ENCODE measurements at regions of chr3 and their contacts with region 1.

Region 1: DNA sequence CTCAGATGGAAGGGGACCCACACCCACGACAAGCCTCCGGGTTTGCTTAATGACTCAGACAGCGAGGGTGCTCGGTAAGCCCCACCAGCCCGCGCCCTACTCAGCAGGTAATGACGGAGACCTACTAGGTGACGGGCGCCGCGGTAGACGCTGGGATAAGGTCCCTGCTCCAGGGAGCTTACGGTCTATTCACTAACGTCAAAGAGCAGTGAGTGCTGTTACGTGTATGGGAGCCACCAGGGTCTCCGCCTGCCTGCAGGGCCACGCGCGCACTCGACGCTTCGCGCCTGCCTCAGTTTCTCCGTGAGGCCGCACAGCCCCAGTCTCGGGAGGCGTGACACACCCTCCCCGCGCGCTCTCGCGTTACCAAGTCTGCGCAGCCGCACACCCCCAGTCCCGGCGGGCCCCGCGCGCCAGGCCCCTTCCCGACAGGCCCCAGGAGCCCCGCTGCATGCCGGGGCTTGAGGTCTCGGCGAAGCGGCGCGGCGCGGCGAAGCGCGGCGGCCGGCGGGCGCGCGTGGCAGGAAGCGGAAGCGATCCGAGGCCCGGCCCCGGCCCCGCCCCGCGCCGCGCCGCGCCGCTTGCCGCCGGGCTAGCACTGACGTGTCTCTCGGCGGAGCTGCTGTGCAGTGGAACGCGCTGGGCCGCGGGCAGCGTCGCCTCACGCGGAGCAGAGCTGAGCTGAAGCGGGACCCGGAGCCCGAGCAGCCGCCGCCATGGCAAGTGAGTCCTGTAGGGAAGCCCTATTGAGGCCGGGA is at the start of gene SEC61A1:
- DNase-seq: peak; percentile 97
- H3K4me3 Mint-ChIP-seq: peak within 1 kb of the TSS; percentile 98
- H3K27ac Mint-ChIP-seq: peak within 1 kb of the TSS; percentile 90
- H3K4me1 Mint-ChIP-seq: peaks cover 36% of the 10 kb centered on the region
- H3K27me3 Mint-ChIP-seq: no peaks in the 10 kb centered on the region
- total RNA-seq, gene SEC61A1: 147 to 149 TPM

Region 2: DNA sequence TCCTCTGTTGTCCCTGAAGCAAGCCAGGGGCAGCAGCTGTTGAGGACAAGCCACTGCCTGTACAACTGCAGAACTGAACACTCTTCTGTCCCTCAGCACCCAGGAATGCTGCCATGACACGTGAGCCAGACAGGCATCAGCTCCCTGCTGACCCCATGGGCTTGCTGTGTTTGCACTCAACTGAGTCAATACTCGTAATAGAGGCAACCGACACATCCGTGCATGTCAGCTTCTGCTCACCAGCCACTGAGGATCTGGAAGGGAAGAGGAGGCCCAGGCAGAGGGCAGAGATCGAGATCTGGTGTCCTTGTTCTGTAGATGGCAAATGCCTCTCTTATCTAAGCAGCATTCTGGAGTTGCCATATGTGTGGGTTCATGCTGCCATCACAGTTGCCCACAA is 54.1 kb before region 1 on chr3:
- CTCF ChIA-PET with region 1: no interaction called
- POLR2A ChIA-PET with region 1: no interaction called
- intact Hi-C with region 1: no loop called
- DNase-seq: no peak
- H3K4me3 Mint-ChIP-seq: no peak overlapping the region
- H3K27ac Mint-ChIP-seq: no peak overlapping the region
- H3K4me1 Mint-ChIP-seq: no peaks in the 10 kb centered on the region
- H3K27me3 Mint-ChIP-seq: no peaks in the 10 kb centered on the region

Region 3: DNA sequence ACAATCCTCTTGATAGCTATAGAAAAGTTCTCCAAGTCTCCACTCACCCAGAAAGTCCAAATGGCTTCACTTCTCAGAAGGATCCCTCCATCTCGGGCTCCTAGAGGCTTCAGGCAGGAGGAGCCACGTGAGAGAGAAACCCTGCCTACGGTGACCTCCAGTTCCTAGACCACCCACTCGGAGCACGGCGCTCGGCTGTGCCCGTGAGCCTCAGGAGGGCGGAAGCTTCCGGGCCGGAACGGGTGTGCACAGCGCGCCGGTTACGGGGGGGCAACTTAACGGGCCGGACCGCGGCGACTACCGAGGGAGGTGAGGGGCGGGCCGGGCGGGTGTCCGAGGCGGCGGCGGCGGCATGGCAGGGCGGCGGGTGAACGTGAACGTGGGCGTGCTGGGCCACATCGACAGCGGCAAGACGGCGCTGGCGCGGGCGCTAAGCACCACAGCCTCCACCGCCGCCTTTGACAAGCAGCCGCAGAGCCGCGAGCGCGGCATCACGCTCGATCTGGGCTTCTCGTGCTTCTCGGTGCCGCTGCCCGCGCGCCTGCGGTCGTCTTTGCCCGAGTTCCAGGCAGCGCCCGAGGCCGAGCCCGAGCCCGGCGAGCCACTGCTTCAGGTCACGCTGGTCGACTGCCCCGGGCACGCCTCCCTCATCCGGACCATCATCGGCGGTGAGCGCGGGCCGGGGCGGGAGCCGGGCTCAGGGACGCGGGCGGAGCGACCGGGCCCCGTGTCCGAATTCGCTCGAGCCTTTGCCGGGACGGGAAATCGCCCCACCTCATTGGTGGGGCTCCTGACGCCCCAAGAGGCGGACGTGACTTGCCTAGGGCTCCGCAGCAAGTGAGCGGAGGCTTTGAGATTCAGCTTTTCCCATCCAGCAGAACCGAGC is 101.4 kb after region 1 on chr3 and contains the start of gene EEFSEC:
- CTCF ChIA-PET with region 1: no interaction called
- POLR2A ChIA-PET with region 1: interaction called, 5 read pairs
- intact Hi-C with region 1: loop called (anchors 2 kb)
- DNase-seq: peak; percentile 91
- H3K4me3 Mint-ChIP-seq: peak within 1 kb of the TSS; percentile 85
- H3K27ac Mint-ChIP-seq: peak within 1 kb of the TSS; percentile 78
- H3K4me1 Mint-ChIP-seq: peaks cover 18% of the 10 kb centered on the region
- H3K27me3 Mint-ChIP-seq: no peaks in the 10 kb centered on the region
- total RNA-seq, gene EEFSEC: 16.1 to 17.2 TPM